CD4-positive, alpha-beta T cell (primary cell): ENCODE measurements at regions of chr21 and their contacts with region 1.

Region 1: DNA sequence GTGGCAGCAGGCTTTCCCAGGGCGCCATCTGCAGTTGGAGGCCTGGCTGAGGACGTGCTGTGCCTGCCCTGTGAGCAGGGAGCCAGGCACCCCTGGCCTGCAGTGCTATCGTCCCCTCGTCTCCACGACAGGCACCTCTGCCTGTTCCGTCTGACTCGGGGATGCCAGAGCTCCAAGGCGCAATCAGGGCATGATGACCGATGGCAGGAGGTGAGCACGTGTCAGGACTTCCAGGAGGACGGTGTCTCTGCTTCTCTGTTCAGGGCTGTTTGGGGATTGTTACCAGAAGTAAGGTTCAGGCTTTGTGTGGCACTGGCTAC is 125.2 kb downstream of the PCBP3 start:
- DNase-seq: peak in 5 of 14 experiments; percentile 15 to 42 (median 27)
- ATAC-seq: no peak
- H3K4me3 ChIP-seq: no peak overlapping the region
- H3K4me3 Mint-ChIP-seq: peak overlapping the region; percentile 77
- H3K27ac ChIP-seq: no peak overlapping the region
- H3K27ac Mint-ChIP-seq: peak overlapping the region; percentile 94
- H3K4me1 ChIP-seq: peaks cover 30% of the 10 kb centered on the region
- H3K4me1 Mint-ChIP-seq: peaks cover 49% of the 10 kb centered on the region
- H3K27me3 ChIP-seq: no peaks in the 10 kb centered on the region
- H3K27me3 Mint-ChIP-seq: no peaks in the 10 kb centered on the region
- CTCF ChIP-seq: no peak

Region 2: GRCh38 chr21:45615145-45615711 is 153.5 kb before region 1 on chr21:
- CTCF ChIA-PET with region 1: no interaction called
- POLR2A ChIA-PET with region 1: no interaction called
- intact Hi-C with region 1: loop called in 1 of 2 experiments (anchors 10 kb)
- DNase-seq: peak; percentile 74 to 98 (median 88)
- ATAC-seq: peak; percentile 89
- H3K4me3 ChIP-seq: peak overlapping the region; percentile 56
- H3K4me3 Mint-ChIP-seq: peak overlapping the region; percentile 87
- H3K27ac ChIP-seq: peak overlapping the region; percentile 71 to 93
- H3K27ac Mint-ChIP-seq: peak overlapping the region; percentile 91
- H3K4me1 ChIP-seq: peaks cover 46% of the 10 kb centered on the region
- H3K4me1 Mint-ChIP-seq: peaks cover 42% of the 10 kb centered on the region
- H3K27me3 ChIP-seq: no peaks in the 10 kb centered on the region
- H3K27me3 Mint-ChIP-seq: no peaks in the 10 kb centered on the region
- CTCF ChIP-seq: no peak

Region 3: DNA sequence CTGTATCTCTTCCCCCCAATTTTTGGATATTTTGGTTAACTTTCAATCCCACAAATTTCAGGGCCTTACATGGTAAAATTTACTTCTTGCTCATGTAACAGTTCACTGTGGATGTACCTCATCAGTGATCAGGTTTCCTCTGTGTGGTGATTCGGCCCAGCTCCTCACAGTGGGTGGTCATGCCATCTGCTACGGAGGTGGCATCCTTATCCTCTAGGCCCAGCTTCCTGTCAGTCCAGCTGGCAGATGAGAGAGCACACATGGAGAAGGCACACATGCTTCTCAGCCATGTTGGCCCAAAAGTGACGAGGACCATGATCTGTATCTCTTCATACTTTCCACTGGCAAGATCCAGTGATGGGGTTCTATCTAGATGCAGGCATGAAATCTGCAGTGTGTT is 98.0 kb before region 1 on chr21:
- CTCF ChIA-PET with region 1: no interaction called
- POLR2A ChIA-PET with region 1: no interaction called
- intact Hi-C with region 1: no loop called
- DNase-seq: no peak
- ATAC-seq: no peak
- H3K4me3 ChIP-seq: no peak overlapping the region
- H3K4me3 Mint-ChIP-seq: no peak overlapping the region
- H3K27ac ChIP-seq: no peak overlapping the region
- H3K27ac Mint-ChIP-seq: no peak overlapping the region
- H3K4me1 ChIP-seq: no peaks in the 10 kb centered on the region
- H3K4me1 Mint-ChIP-seq: no peaks in the 10 kb centered on the region
- H3K27me3 ChIP-seq: no peaks in the 10 kb centered on the region
- H3K27me3 Mint-ChIP-seq: no peaks in the 10 kb centered on the region
- CTCF ChIP-seq: no peak

Region 4: DNA sequence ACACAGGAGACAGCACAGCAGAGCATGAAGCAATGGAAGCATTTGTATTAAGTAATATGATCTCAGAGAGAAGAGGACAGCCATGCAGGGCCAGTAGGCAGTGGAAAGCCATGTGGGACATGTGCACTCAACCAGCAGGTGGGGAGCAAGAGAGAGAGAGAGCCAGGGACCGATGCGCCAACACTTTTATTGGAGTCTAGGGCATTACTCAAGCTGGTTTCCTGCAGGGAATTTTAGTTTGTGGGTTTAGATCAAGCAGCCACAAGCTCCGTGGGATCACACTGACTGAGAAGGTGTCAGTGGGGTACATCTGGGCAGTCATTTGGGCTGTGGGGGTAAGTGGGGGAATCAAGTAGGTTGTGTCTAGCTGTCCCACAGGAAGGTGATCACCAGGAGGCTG is 11.9 kb after region 1 on chr21:
- CTCF ChIA-PET with region 1: no interaction called
- POLR2A ChIA-PET with region 1: no interaction called
- intact Hi-C with region 1: no loop called
- DNase-seq: no peak
- ATAC-seq: no peak
- H3K4me3 ChIP-seq: no peak overlapping the region
- H3K4me3 Mint-ChIP-seq: no peak overlapping the region
- H3K27ac ChIP-seq: no peak overlapping the region
- H3K27ac Mint-ChIP-seq: no peak overlapping the region
- H3K4me1 ChIP-seq: no peaks in the 10 kb centered on the region
- H3K4me1 Mint-ChIP-seq: no peaks in the 10 kb centered on the region
- H3K27me3 ChIP-seq: no peaks in the 10 kb centered on the region
- H3K27me3 Mint-ChIP-seq: no peaks in the 10 kb centered on the region
- CTCF ChIP-seq: no peak

Region 5: GRCh38 chr21:45830221-45830640 is 61.5 kb after region 1 on chr21:
- CTCF ChIA-PET with region 1: no interaction called
- POLR2A ChIA-PET with region 1: no interaction called
- intact Hi-C with region 1: no loop called
- DNase-seq: no peak
- ATAC-seq: no peak
- H3K4me3 ChIP-seq: no peak overlapping the region
- H3K4me3 Mint-ChIP-seq: no peak overlapping the region
- H3K27ac ChIP-seq: no peak overlapping the region
- H3K27ac Mint-ChIP-seq: no peak overlapping the region
- H3K4me1 ChIP-seq: peaks cover 17% of the 10 kb centered on the region
- H3K4me1 Mint-ChIP-seq: peaks cover 12% of the 10 kb centered on the region
- H3K27me3 ChIP-seq: no peaks in the 10 kb centered on the region
- H3K27me3 Mint-ChIP-seq: no peaks in the 10 kb centered on the region
- CTCF ChIP-seq: no peak